ENCODE measurements at regions of chr16 and their contacts with region 1.

Region 1: DNA sequence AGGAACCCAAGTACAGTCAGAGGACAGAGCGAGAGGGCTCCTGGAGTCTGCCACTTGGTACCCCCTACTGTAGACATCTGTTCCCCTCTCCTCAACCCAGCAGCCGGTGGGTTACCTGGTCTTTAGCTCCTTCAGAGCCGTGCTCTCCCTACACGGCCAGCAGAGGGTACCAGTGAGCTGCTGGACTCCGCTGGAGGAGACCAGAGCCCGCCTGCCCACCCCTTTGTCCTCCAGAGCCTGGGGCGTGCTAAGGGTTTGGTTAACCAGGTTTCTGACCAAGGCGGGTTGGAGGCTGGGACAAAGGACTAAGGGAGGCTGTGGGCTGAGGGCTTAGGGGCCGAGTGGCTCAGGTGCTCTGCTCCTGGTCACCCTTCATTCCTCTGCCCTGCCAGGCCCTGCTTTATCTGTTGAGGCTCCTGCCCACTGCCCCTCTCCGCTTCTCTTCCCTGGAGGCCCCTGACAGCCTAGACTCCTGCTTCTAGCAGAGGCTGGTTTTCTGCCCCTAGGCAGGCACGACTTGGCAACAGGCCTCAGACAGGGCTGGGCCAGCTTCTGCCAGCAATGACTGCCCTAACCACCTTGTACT is 2.7 kb upstream of the HSD11B2 start:
- DNase-seq: peak; percentile 71
- ATAC-seq: peak; percentile 67
- H3K4me3 Mint-ChIP-seq: no peak overlapping the region
- H3K27ac Mint-ChIP-seq: no peak overlapping the region
- H3K4me1 Mint-ChIP-seq: peaks cover 7% of the 10 kb centered on the region
- H3K27me3 Mint-ChIP-seq: peaks cover 45% of the 10 kb centered on the region

Region 2: DNA sequence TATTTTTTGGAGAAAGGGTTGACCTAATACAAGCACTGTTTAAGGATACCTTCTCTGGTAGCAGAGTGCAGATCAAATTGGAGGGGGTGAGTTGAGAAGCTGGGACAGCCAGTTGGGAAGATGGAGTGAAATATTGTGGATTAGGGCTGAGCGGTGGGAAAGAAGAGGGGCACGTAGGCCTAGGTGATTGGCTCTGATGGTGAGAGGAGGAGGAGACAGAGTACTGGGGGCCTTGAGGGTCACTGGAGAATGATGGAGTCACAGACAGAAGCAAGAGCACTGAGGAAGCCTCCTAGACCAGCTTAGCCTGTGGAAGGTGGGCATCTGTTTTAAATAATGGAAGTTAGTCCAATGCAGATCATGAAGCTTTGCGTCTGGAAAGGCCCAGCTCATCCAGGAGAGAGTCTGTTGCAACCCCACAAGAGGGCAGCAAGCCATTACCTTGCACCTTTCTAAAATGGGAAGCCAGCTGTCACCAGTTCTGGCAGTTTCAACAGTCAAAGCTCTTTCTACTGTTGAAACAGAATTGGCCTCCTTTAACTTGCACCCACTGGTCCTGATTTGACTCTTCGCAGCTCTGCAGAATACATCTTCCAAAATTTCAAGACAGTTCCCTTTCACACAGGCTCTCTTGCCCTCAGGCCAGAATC is 167.7 kb before region 1 on chr16:
- CTCF ChIA-PET with region 1: interaction called, 11 read pairs
- POLR2A ChIA-PET with region 1: no interaction called
- DNase-seq: peak; percentile 51
- ATAC-seq: peak; percentile 54
- H3K4me3 Mint-ChIP-seq: no peak overlapping the region
- H3K27ac Mint-ChIP-seq: no peak overlapping the region
- H3K4me1 Mint-ChIP-seq: no peaks in the 10 kb centered on the region
- H3K27me3 Mint-ChIP-seq: no peaks in the 10 kb centered on the region

Region 3: DNA sequence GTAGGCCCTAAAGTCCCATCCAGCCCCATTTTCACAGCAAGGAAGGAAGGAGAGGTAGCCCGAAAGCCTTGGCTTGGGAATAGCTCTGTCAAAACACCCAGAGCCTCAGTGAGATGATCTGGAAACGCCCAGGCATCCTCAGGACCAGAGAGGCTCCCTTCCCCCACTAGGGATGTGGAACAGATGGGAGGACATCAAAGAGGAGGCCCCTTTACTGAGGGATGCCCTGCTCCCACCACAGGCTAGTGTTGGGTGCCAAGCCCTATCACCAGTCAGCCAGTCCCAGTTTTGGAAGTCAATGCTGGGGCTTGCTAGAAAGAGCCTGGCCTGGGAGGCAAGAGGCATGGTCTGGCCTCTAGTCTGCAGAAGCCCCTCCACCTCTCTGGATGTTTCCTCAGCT is 39.6 kb before region 1 on chr16:
- CTCF ChIA-PET with region 1: no interaction called
- POLR2A ChIA-PET with region 1: no interaction called
- DNase-seq: no peak
- ATAC-seq: no peak
- H3K4me3 Mint-ChIP-seq: no peak overlapping the region
- H3K27ac Mint-ChIP-seq: no peak overlapping the region
- H3K4me1 Mint-ChIP-seq: peaks cover 1% of the 10 kb centered on the region
- H3K27me3 Mint-ChIP-seq: peaks cover 24% of the 10 kb centered on the region

Region 4: GRCh38 chr16:67415872-67416793 is 12.1 kb before region 1 on chr16 and contains the start of gene ZDHHC1:
- CTCF ChIA-PET with region 1: interaction called, 34 read pairs
- POLR2A ChIA-PET with region 1: no interaction called
- DNase-seq: peak; percentile 48
- ATAC-seq: peak; percentile 81
- H3K4me3 Mint-ChIP-seq: peak within 1 kb of the TSS; percentile 67
- H3K27ac Mint-ChIP-seq: peak within 1 kb of the TSS; percentile 12
- H3K4me1 Mint-ChIP-seq: peaks cover 8% of the 10 kb centered on the region
- H3K27me3 Mint-ChIP-seq: peaks cover 36% of the 10 kb centered on the region
- total RNA-seq, gene ZDHHC1: 0.26 TPM in 1 of 2 experiments, not detected in the other

Region 5: GRCh38 chr16:67441271-67441753 is 13.1 kb after region 1 on chr16:
- CTCF ChIA-PET with region 1: interaction called, 52 read pairs
- POLR2A ChIA-PET with region 1: no interaction called
- DNase-seq: no peak
- ATAC-seq: no peak
- H3K4me3 Mint-ChIP-seq: no peak overlapping the region
- H3K27ac Mint-ChIP-seq: no peak overlapping the region
- H3K4me1 Mint-ChIP-seq: no peaks in the 10 kb centered on the region
- H3K27me3 Mint-ChIP-seq: no peaks in the 10 kb centered on the region

Region 6: GRCh38 chr16:67447508-67448076 is 19.4 kb after region 1 on chr16:
- CTCF ChIA-PET with region 1: interaction called, 52 read pairs
- POLR2A ChIA-PET with region 1: no interaction called
- DNase-seq: peak; percentile 82
- ATAC-seq: peak; percentile 92
- H3K4me3 Mint-ChIP-seq: no peak overlapping the region
- H3K27ac Mint-ChIP-seq: no peak overlapping the region
- H3K4me1 Mint-ChIP-seq: peaks cover 10% of the 10 kb centered on the region
- H3K27me3 Mint-ChIP-seq: no peaks in the 10 kb centered on the region

Region 7: GRCh38 chr16:67456391-67457081 is 28.3 kb after region 1 on chr16:
- CTCF ChIA-PET with region 1: interaction called, 14 read pairs
- POLR2A ChIA-PET with region 1: no interaction called
- DNase-seq: no peak
- ATAC-seq: no peak
- H3K4me3 Mint-ChIP-seq: no peak overlapping the region
- H3K27ac Mint-ChIP-seq: no peak overlapping the region
- H3K4me1 Mint-ChIP-seq: peaks cover 23% of the 10 kb centered on the region
- H3K27me3 Mint-ChIP-seq: no peaks in the 10 kb centered on the region

Region 8: DNA sequence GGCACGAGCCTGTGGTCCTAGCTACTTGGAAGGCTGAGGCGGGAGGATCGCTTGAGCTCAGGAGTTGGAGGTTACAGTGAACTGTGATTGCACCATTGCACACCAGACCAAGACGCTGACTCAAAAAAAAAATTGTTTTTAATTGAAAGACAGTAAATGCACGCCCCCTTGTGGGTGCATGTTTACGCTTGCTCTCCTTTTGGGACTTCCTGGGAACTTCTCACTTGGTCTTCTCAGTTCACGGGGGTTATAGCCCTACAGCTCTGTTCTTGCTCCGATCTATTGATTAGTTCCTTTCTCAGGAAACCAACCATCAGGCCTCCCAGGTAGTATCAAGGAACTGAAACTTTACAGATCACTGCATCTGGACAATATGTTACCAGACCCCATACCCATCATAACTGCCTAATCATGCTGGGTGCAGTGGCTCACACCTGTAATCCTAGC is 86.2 kb after region 1 on chr16:
- CTCF ChIA-PET with region 1: interaction called, 25 read pairs
- POLR2A ChIA-PET with region 1: no interaction called
- DNase-seq: peak; percentile 90
- ATAC-seq: peak; percentile 82
- H3K4me3 Mint-ChIP-seq: no peak overlapping the region
- H3K27ac Mint-ChIP-seq: peak overlapping the region; percentile 84
- H3K4me1 Mint-ChIP-seq: peaks cover 36% of the 10 kb centered on the region
- H3K27me3 Mint-ChIP-seq: no peaks in the 10 kb centered on the region

Region 9: DNA sequence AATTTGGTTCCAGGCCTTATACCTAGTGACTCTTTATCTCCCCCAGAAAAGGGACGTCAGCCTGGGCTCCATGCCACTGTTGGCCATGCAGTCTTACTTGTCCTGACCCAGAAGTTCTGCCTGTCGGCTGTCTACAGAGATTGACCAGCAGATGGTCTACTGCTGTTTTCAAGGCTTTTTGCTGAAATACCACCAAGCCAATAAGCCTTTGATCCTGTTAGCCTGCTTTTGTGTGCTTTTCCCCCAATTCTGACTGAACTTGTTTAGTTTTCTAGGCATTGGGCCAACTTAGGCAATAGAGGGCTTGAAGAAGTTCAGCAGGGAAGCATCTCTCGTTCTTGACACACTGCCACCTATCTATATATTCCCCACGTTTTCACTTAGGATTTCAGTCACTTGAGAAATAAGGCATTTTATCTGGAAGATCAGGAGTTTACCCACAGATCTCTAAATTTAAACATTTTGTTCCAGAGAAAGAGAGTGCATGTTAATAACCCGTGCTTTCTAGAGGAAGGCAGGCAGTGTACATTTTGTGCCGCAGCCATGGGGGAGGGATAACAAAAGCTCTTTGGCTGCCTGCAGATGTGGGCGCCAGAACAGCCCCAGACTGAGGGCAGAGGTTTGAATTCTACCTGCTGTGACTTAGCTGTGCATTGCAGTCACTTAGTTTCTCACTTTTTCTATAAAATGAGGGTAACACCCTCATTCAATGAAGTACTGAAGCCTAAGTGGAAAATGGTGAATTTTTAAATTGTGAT is 204.4 kb after region 1 on chr16:
- CTCF ChIA-PET with region 1: no interaction called
- POLR2A ChIA-PET with region 1: no interaction called
- DNase-seq: no peak
- ATAC-seq: no peak
- H3K4me3 Mint-ChIP-seq: no peak overlapping the region
- H3K27ac Mint-ChIP-seq: no peak overlapping the region
- H3K4me1 Mint-ChIP-seq: no peaks in the 10 kb centered on the region
- H3K27me3 Mint-ChIP-seq: no peaks in the 10 kb centered on the region

Measured in activated CD8-positive, alpha-beta T cell treated with anti-CD3 and anti-CD28 coated beads, Interleukin-2, amount 10 ng/mL, durations not matched to agents 7 days and 5 days (primary cell).